Mucosa of descending colon (tissue), 3 donors: ENCODE measurements at regions of chr14 and their contacts with region 1.

Region 1: GRCh38 chr14:104137297-104138097 is 890 bp upstream of the KIF26A start:
- DNase-seq: peak; percentile 64 to 81 (median 76)
- ATAC-seq: peak; percentile 86
- H3K4me3 ChIP-seq: no peak overlapping the region
- H3K4me1 ChIP-seq: peaks cover 47% of the 10 kb centered on the region
- CTCF ChIP-seq: peak; percentile 82

Region 2: GRCh38 chr14:104240434-104241157 is 103.1 kb after region 1 on chr14:
- intact Hi-C with region 1: no loop called
- DNase-seq: peak; percentile 68 to 80 (median 75)
- ATAC-seq: peak; percentile 95
- H3K4me3 ChIP-seq: no peak overlapping the region
- H3K4me1 ChIP-seq: peaks cover 12% of the 10 kb centered on the region
- CTCF ChIP-seq: no peak

Region 3: GRCh38 chr14:104563742-104564615 is 426.5 kb after region 1 on chr14:
- intact Hi-C with region 1: loop called (anchors 5 to 10 kb)
- DNase-seq: peak in 2 of 3 donors; percentile 80 to 81
- ATAC-seq: peak; percentile 68
- H3K4me3 ChIP-seq: no peak overlapping the region
- H3K4me1 ChIP-seq: no peaks in the 10 kb centered on the region
- CTCF ChIP-seq: peak; percentile 82

Region 4: GRCh38 chr14:104639889-104640548 is 502.5 kb after region 1 on chr14:
- intact Hi-C with region 1: loop called in 1 of 2 experiments (anchors 10 kb)
- DNase-seq: peak in 2 of 3 donors; percentile 72 to 78
- ATAC-seq: peak; percentile 90
- H3K4me3 ChIP-seq: no peak overlapping the region
- H3K4me1 ChIP-seq: no peaks in the 10 kb centered on the region
- CTCF ChIP-seq: peak; percentile 87